PC-9 (cell line): ENCODE measurements at regions of chr11 and their contacts with region 1.

Region 1: GRCh38 chr11:64924102-64924851 is at the start of gene PPP2R5B:
- DNase-seq: peak; percentile 91
- H3K4me3 ChIP-seq: peak within 1 kb of the TSS; percentile 66
- H3K27ac ChIP-seq: peak within 1 kb of the TSS; percentile 58
- H3K4me1 ChIP-seq: peaks cover 11% of the 10 kb centered on the region
- H3K27me3 ChIP-seq: no peaks in the 10 kb centered on the region
- CTCF ChIP-seq: no peak
- total RNA-seq, gene PPP2R5B: 13.7 and 13.9 TPM in 2 replicates

Region 2: GRCh38 chr11:64854534-64855429 is 69.5 kb before region 1 on chr11:
- CTCF ChIA-PET with region 1: no interaction called
- POLR2A ChIA-PET with region 1: no interaction called
- intact Hi-C with region 1: loop called (anchors 2 kb)
- DNase-seq: peak; percentile 96 to 99
- H3K4me3 ChIP-seq: peak overlapping the region; percentile 18; the same call in 1 of the 2 replicates
- H3K27ac ChIP-seq: peak overlapping the region; percentile 84
- H3K4me1 ChIP-seq: peaks cover 88% of the 10 kb centered on the region
- H3K27me3 ChIP-seq: no peaks in the 10 kb centered on the region
- CTCF ChIP-seq: no peak

Region 3: DNA sequence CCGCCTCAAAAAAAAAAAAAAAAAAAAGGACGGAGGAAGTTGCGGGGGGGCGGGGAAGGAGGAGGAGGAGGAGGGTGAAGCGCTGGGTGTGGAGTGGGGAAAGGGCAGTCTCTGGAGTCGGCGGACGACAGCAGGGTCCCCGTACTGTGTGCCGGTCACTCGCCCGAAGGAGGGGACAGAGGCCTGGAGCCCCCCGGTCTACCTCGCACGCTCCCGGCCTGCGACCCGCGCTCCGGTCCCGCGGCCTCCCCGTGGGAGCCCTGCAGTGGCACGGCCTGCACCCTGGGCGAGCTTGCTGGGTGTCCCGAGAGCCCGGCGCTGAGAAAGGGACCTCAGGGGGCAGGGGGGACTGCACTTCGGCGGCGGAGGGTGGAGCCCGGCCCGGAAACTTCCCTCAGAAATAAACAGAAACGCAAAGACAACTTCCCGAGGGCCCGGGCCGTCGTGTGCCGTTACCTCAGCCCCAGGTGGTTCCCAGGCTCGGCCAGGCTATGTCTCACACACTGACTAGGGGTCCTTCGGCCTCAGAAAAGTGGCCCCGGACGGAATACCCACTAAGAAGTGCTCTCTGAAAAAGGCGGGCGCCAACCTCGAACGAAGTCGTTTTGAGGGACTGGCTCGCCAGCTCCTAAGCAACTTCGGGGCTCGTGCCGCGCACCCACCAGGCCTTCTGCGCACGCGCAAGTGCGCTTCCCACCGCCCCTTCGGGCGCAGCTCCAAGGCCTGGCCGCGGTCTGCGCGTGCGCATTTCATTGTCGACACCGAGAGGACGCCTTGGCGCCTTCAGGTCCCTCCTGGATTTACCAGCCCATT is 47.4 kb after region 1 on chr11 and contains the start of gene MAJIN:
- CTCF ChIA-PET with region 1: no interaction called
- POLR2A ChIA-PET with region 1: interaction called, 30 read pairs
- intact Hi-C with region 1: loop called (anchors 1 kb)
- DNase-seq: peak; percentile 66 to 93
- H3K4me3 ChIP-seq: peak within 1 kb of the TSS; percentile 52; the same call in 1 of the 2 replicates
- H3K27ac ChIP-seq: peak within 1 kb of the TSS; percentile 95
- H3K4me1 ChIP-seq: peaks cover 26% of the 10 kb centered on the region
- H3K27me3 ChIP-seq: 0 out of 2 replicates have a peak, but pooled peaks cover under 1% of the 10 kb centered on the region
- CTCF ChIP-seq: no peak
- total RNA-seq, gene MAJIN: 4.5 and 7.1 TPM in 2 replicates

Region 4: GRCh38 chr11:65027213-65028067 is 103.2 kb after region 1 on chr11 and contains the start of gene SNX15:
- CTCF ChIA-PET with region 1: no interaction called
- POLR2A ChIA-PET with region 1: no interaction called
- intact Hi-C with region 1: loop called (anchors 1 kb)
- DNase-seq: peak; percentile 90 to 95
- H3K4me3 ChIP-seq: peak within 1 kb of the TSS; percentile 64
- H3K27ac ChIP-seq: peak within 1 kb of the TSS; percentile 36
- H3K4me1 ChIP-seq: peaks cover 9% of the 10 kb centered on the region
- H3K27me3 ChIP-seq: no peaks in the 10 kb centered on the region
- CTCF ChIP-seq: peak; percentile 94
- total RNA-seq, gene SNX15: 38.2 and 40.6 TPM in 2 replicates